Kidney (tissue), 22 donors: ENCODE measurements at regions of chr9 and their contacts with region 1.

Region 1: GRCh38 chr9:112097712-112098688 is 77.1 kb downstream of the SUSD1 start:
- DNase-seq: peak in 4 of 5 donors; percentile 76 to 87 (median 83)
- H3K4me3 ChIP-seq: no peak overlapping the region
- H3K27ac ChIP-seq: no peak overlapping the region
- H3K4me1 ChIP-seq: peaks cover 0 to 7% (median 0%) of the 10 kb centered on the region in 3 donors
- H3K27me3 ChIP-seq: no peaks in the 10 kb centered on the region
- CTCF ChIP-seq: peak; percentile 94

Region 2: DNA sequence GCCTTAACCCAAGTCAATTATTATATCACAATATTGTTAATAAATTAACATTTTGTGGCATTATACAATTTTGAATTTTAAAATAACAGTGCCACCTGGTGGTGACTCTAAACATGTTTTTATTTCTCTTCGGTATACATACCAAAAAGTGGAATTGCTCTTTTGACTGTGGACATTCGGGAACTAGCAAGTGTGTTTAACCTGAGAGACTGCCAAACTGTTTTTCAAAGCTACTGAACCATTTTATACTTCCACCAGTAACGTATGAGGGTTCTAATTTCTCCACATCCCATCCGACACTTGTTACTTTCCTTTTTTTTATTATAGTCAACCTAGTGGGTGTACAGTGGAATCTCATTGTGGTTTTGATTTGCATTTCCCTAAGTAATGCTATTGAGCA is 263.6 kb after region 1 on chr9:
- intact Hi-C with region 1: loop called (anchors 5 kb)
- DNase-seq: peak in 2 of 5 donors; percentile 71
- H3K4me3 ChIP-seq: no peak overlapping the region
- H3K27ac ChIP-seq: no peak overlapping the region
- H3K4me1 ChIP-seq: peaks cover 0 to 2% (median 2%) of the 10 kb centered on the region in 3 donors
- H3K27me3 ChIP-seq: no peaks in the 10 kb centered on the region
- CTCF ChIP-seq: peak; percentile 56

Region 3: GRCh38 chr9:112411626-112412027 is 313.6 kb after region 1 on chr9:
- intact Hi-C with region 1: no loop called
- DNase-seq: no peak
- H3K4me3 ChIP-seq: no peak overlapping the region
- H3K27ac ChIP-seq: no peak overlapping the region
- H3K4me1 ChIP-seq: no peaks in the 10 kb centered on the region
- H3K27me3 ChIP-seq: no peaks in the 10 kb centered on the region
- CTCF ChIP-seq: no peak